RWPE1 (cell line): ENCODE measurements at regions of chr17 and their contacts with region 1.

Region 1: GRCh38 chr17:50037321-50038071 is 18.4 kb upstream of the ITGA3 start:
- DNase-seq: no peak
- H3K27ac ChIP-seq: peak overlapping the region; percentile 94
- CTCF ChIP-seq: no peak

Region 2: GRCh38 chr17:50056231-50056960 is 18.9 kb after region 1 on chr17:
- CTCF ChIA-PET with region 1: interaction called, 4 read pairs
- POLR2A ChIA-PET with region 1: interaction called, 13 read pairs
- DNase-seq: no peak
- H3K27ac ChIP-seq: peak overlapping the region; percentile 100
- CTCF ChIP-seq: peak; percentile 63